ENCODE measurements at regions of chrX and their contacts with region 1.

Region 1: GRCh38 chrX:69374569-69374968 is 129.6 kb upstream of the NALF2 start:
- DNase-seq: no peak
- ATAC-seq: no peak
- H3K4me3 ChIP-seq: no peak overlapping the region
- H3K27ac ChIP-seq: no peak overlapping the region
- H3K4me1 ChIP-seq: no peaks in the 10 kb centered on the region
- H3K27me3 ChIP-seq: no peaks in the 10 kb centered on the region

Region 2: GRCh38 chrX:69305333-69306062 is 69.1 kb before region 1 on chrX:
- intact Hi-C with region 1: loop called in 1 of 2 experiments (anchors 10 kb)
- DNase-seq: no peak
- ATAC-seq: no peak
- H3K4me3 ChIP-seq: no peak overlapping the region
- H3K27ac ChIP-seq: no peak overlapping the region
- H3K4me1 ChIP-seq: no peaks in the 10 kb centered on the region
- H3K27me3 ChIP-seq: no peaks in the 10 kb centered on the region

Measured in aorta (tissue), 5 donors.